ENCODE measurements at regions of chr6 and their contacts with region 1.

Region 1: DNA sequence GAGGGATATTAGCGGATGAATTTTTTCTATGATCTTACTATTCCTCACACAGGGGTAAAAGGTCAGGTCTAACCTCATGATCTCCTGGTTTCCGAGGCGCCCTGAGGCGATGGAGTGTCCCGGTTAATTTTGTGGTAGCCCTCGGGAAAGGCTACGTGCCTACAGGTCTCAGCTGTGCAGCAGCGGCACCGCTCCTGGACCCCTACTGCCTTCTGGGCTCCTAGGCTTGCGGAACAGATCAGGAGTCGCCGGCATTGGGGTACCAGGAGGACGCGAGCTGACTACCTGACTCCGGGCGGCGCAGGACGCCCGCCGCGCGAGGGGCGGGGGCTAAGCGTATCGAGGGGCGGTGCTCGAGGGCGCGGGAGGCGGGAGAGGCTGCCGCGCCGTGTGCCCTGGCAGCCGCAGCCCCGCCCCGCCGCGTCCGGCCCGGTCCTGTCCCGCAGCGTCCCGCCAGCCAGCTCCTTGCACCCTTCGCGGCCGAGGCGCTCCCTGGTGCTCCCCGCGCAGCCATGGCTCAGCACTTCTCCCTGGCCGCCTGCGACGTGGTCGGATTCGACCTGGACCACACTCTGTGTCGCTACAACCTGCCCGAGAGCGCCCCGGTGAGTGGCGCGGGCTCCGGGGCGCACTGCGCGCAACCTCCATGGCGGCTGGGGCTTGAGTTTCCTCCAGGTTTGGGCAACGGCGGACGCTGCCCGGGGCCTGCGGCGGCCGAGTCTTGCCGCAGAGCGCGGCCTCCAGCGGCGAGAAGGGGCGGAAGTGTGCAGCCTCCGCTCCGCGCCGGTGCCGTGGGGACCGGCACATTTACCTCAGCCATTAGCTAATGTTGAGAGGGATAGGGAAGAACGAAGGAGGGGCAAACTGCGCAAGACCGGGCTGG is at the start of gene NT5DC1:
- DNase-seq: peak; percentile 75 to 87 (median 81)
- H3K4me3 ChIP-seq: peak within 1 kb of the TSS; percentile 75
- H3K4me3 Mint-ChIP-seq: peak within 1 kb of the TSS; percentile 91 to 98 (median 95)
- H3K27ac ChIP-seq: peak within 1 kb of the TSS; percentile 86
- H3K27ac Mint-ChIP-seq: peak within 1 kb of the TSS; percentile 53 to 97 (median 94)
- H3K4me1 ChIP-seq: peaks cover 28% of the 10 kb centered on the region
- H3K4me1 Mint-ChIP-seq: peaks cover 45 to 59% (median 57%) of the 10 kb centered on the region in 3 donors
- H3K27me3 ChIP-seq: no peaks in the 10 kb centered on the region
- H3K27me3 Mint-ChIP-seq: peaks cover 0 to 2% of the 10 kb centered on the region in 2 donors
- total RNA-seq, gene NT5DC1: 46.3 to 47.6 TPM

Region 2: GRCh38 chr6:116010790-116011401 is 89.8 kb before region 1 on chr6:
- CTCF ChIA-PET with region 1: interaction called, 16 read pairs
- POLR2A ChIA-PET with region 1: no interaction called
- DNase-seq: peak; percentile 7 to 57 (median 21)
- H3K4me3 ChIP-seq: no peak overlapping the region
- H3K4me3 Mint-ChIP-seq: no peak overlapping the region
- H3K27ac ChIP-seq: no peak overlapping the region
- H3K27ac Mint-ChIP-seq: no peak overlapping the region
- H3K4me1 ChIP-seq: no peaks in the 10 kb centered on the region
- H3K4me1 Mint-ChIP-seq: no peaks in the 10 kb centered on the region
- H3K27me3 ChIP-seq: no peaks in the 10 kb centered on the region
- H3K27me3 Mint-ChIP-seq: peaks cover 4 to 29% of the 10 kb centered on the region in 2 donors

Region 3: GRCh38 chr6:116144605-116145004 is 43.9 kb after region 1 on chr6:
- CTCF ChIA-PET with region 1: no interaction called
- POLR2A ChIA-PET with region 1: no interaction called
- DNase-seq: no peak
- H3K4me3 ChIP-seq: no peak overlapping the region
- H3K4me3 Mint-ChIP-seq: no peak overlapping the region
- H3K27ac ChIP-seq: no peak overlapping the region
- H3K27ac Mint-ChIP-seq: no peak overlapping the region
- H3K4me1 ChIP-seq: no peaks in the 10 kb centered on the region
- H3K4me1 Mint-ChIP-seq: peaks cover 0 to 4% (median 3%) of the 10 kb centered on the region in 3 donors
- H3K27me3 ChIP-seq: no peaks in the 10 kb centered on the region
- H3K27me3 Mint-ChIP-seq: no peaks in the 10 kb centered on the region

Region 4: GRCh38 chr6:116190550-116190949 is 89.9 kb after region 1 on chr6:
- CTCF ChIA-PET with region 1: no interaction called
- POLR2A ChIA-PET with region 1: no interaction called
- DNase-seq: no peak
- H3K4me3 ChIP-seq: no peak overlapping the region
- H3K4me3 Mint-ChIP-seq: no peak overlapping the region
- H3K27ac ChIP-seq: no peak overlapping the region
- H3K27ac Mint-ChIP-seq: no peak overlapping the region
- H3K4me1 ChIP-seq: no peaks in the 10 kb centered on the region
- H3K4me1 Mint-ChIP-seq: peaks cover 4 to 7% (median 7%) of the 10 kb centered on the region in 3 donors
- H3K27me3 ChIP-seq: no peaks in the 10 kb centered on the region
- H3K27me3 Mint-ChIP-seq: no peaks in the 10 kb centered on the region

Region 5: GRCh38 chr6:116570856-116571682 is 470.4 kb after region 1 on chr6 and contains the start of gene RWDD1:
- CTCF ChIA-PET with region 1: no interaction called
- POLR2A ChIA-PET with region 1: interaction called, 15 read pairs
- DNase-seq: peak; percentile 97 to 99 (median 99)
- H3K4me3 ChIP-seq: peak within 1 kb of the TSS; percentile 99
- H3K4me3 Mint-ChIP-seq: peak within 1 kb of the TSS; percentile 97 to 99 (median 99)
- H3K27ac ChIP-seq: peak within 1 kb of the TSS; percentile 96
- H3K27ac Mint-ChIP-seq: peak within 1 kb of the TSS; percentile 97 to 100 (median 100)
- H3K4me1 ChIP-seq: peaks cover 30% of the 10 kb centered on the region
- H3K4me1 Mint-ChIP-seq: peaks cover 49 to 65% (median 53%) of the 10 kb centered on the region in 3 donors
- H3K27me3 ChIP-seq: no peaks in the 10 kb centered on the region
- H3K27me3 Mint-ChIP-seq: peaks cover 0 to 1% of the 10 kb centered on the region in 2 donors
- total RNA-seq, gene RWDD1: 54.6 to 56.2 TPM

Measured in CD8-positive, alpha-beta memory T cell (primary cell).